ENCODE measurements at regions of chr1 and their contacts with region 1.

Region 1: GRCh38 chr1:2044510-2045319 is 5.5 kb upstream of the PRKCZ start:
- DNase-seq: peak; percentile 88

Region 2: DNA sequence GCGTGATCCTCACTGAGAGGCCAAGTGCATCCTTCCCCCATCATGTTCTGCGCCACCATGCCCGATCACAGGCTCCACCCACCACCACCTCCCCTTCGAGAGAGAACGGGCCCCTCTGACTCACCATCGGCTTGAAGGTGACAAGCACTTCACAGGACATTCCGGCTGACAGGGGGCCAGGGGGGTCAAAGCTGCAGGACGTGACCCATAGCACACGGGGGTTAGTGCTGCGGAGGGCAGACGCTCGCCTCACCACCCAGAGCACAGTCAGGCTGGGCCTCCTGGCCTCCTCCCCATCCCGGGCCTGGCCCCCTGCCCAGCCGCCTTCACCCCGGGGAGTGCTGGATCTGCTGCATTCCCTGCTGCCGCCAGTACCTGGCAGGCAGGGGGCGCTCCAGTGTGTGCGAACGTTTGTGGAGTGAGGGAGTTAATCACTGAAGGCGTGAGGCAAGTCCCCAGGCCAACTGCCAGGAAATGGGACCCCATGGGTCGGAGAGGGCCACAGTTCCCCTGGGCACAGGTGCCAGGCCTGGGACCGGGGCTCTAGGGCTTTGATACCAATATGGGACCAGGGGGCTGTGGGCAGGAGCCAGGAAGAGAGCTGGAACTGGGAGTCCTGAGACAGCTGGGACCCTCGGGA is 84.8 kb before region 1 on chr1:
- in situ Hi-C with region 1: loop called (anchors 10 kb)
- DNase-seq: peak; percentile 87

Measured in KBM-7 (cell line).